OCI-LY7 (cell line): ENCODE measurements at regions of chr17 and their contacts with region 1.

Region 1: DNA sequence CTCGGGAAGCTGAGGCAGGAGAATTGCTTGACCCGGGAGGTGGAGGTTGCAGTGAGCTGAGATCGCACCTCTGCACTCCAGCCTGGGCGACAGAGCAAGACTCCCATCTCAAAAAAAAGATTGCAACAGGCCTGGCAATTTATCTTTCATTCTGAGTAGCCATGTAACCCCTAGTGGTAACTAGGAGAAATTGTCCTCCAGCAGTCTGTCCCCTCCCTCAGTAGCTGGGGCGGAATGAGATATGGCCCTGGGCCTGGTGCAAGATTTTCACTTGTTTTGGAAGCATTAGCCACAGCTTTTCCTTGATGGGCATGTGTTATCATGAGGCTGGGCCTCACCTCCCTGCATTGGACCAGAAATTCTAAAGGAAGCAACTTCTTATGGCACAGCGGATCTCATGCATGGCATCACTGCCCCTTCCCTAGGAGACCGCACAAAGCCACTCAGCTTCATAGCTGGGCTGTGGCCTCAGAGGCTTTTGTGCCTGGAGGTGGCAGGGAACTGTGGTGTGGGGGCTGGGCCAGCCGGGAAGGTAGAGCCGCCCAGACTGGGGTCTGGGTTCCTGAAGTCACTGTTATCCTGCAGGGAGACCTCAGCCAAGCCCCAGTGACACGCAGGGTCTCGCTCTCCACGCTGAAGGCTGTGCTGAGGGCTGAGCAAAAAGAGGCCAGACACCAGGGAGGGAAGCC is 13.4 kb downstream of the NATD1 start:
- DNase-seq: peak; percentile 51
- H3K4me3 ChIP-seq: no peak overlapping the region
- H3K27ac ChIP-seq: no peak overlapping the region
- H3K4me1 ChIP-seq: no peaks in the 10 kb centered on the region
- CTCF ChIP-seq: peak; percentile 66

Region 2: DNA sequence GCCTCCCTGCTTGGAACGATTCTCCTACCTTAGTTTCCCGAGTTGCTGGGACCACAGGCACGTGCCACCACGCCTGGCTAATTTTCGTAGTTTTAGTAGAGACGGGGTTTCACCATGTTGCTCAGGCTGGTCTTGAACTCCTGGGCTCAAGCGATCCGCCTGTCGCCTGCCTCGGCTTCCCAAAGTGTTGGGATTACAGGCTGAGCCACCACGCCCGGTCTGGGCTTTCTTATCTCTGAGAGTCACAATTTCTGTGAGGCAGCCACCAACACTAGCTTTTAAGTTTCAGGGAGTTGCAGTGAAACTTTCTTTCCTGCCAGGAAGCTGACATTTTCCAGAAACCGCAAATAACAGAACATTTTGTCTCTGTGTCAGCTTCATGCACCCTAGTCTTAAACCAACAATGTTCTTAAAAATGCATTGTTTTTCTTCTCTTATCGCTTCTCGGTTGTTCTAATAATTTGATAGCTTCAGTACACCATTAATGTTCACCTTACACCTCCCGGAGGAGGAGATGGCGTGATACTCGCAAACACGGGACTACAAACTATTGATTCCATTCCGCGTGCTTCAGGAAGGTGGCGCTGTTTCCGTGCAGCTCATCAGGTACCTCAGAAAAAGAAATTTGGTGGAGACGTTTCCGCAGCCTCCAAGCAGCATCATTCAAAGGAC is 120.4 kb before region 1 on chr17:
- CTCF ChIA-PET with region 1: no interaction called
- POLR2A ChIA-PET with region 1: no interaction called
- intact Hi-C with region 1: loop called (anchors 5 kb)
- DNase-seq: peak; percentile 81
- H3K4me3 ChIP-seq: no peak overlapping the region
- H3K27ac ChIP-seq: no peak overlapping the region
- H3K4me1 ChIP-seq: peaks cover 4% of the 10 kb centered on the region
- CTCF ChIP-seq: peak; percentile 94

Region 3: GRCh38 chr17:21263351-21263750 is 23.5 kb after region 1 on chr17:
- CTCF ChIA-PET with region 1: no interaction called
- POLR2A ChIA-PET with region 1: no interaction called
- intact Hi-C with region 1: no loop called
- DNase-seq: no peak
- H3K4me3 ChIP-seq: no peak overlapping the region
- H3K27ac ChIP-seq: no peak overlapping the region
- H3K4me1 ChIP-seq: peaks cover 18% of the 10 kb centered on the region
- CTCF ChIP-seq: no peak